ENCODE measurements at regions of chr5 and their contacts with region 1.

Region 1: DNA sequence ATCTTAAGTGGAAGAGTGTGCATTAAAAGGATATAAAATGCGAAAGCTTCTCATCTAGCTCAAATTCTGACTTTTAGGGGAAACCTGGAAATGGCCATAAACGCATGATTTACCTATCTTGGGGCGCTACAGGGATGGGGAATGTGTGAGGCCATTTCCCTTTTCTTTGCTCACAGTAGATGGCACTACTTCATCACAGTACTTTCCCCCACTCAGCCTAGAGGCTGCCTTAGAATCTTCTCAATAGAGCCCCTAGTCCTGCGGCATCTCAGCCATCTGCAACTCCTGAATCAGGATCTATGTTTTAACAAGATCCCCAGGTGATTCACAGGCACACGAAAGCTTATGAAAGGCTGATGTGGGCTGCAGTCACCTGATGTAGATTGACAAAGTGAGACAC is 110.8 kb downstream of the LHFPL2 start:
- H3K4me3 Mint-ChIP-seq: no peak overlapping the region
- H3K27ac Mint-ChIP-seq: peak overlapping the region; percentile 99
- H3K4me1 Mint-ChIP-seq: peaks cover 97% of the 10 kb centered on the region
- H3K27me3 Mint-ChIP-seq: no peaks in the 10 kb centered on the region

Region 2: DNA sequence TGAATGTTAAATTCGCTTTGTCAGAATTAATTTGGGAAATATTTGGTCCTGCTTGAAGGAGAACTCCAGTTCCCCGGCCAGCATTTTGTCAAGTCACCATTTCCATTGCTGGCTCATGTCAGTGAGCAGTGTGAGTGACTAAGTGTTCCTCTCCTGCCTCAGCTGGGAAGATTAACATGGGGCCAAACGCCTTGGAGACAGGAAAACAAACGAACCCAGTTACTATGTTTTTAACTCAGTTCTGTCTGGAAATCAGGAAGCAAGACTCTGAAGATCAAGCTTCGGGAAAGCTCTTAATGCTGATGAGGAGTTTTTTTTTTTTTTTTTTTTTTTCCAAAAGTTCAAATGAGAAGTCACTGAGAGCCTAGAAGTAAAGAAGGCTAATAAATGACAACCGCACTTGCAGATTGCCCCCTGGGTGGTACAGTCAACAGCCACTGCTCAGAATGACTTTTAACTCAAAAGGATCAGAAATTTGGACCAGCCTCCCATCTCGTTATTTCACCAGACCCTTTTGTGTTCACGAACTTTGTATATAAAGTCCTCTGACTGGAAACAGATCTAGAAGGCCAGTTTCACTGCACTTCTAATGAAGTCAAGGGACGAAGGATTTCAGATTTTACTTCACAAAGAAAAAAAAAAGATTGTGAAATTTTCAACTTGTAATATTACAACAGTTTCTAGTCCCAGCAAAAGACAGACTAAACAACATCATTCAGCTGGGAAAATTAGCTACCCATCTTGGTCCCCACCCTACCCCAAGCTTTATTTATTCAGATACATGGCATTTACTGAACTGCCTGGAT is 10.6 kb before region 1 on chr5:
- intact Hi-C with region 1: loop called (anchors 2 kb)
- H3K4me3 Mint-ChIP-seq: peak overlapping the region; percentile 6
- H3K27ac Mint-ChIP-seq: peak overlapping the region; percentile 92
- H3K4me1 Mint-ChIP-seq: peaks cover 68% of the 10 kb centered on the region
- H3K27me3 Mint-ChIP-seq: no peaks in the 10 kb centered on the region

Region 3: DNA sequence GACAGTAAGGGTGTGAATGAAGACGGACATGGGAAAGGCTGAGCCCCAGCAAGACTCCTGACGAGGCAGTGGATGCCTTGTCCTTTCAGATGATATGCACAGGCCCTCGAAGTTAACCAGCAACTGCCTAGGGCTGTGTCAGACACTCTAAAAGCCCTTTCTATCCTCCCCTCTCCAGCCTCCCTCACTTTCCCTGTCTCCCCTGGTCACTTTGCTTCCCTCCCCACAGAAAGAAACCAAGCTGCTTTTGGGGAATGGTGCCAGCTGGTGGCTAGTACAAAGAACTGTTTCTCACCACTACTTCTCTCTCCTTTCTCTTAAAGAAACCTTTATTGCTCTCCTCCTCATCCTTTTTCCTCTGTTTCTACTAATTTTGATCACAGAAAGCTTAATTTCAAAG is 89.4 kb after region 1 on chr5:
- intact Hi-C with region 1: loop called (anchors 2 kb)
- H3K4me3 Mint-ChIP-seq: no peak overlapping the region
- H3K27ac Mint-ChIP-seq: no peak overlapping the region
- H3K4me1 Mint-ChIP-seq: peaks cover 29% of the 10 kb centered on the region
- H3K27me3 Mint-ChIP-seq: peaks cover 2% of the 10 kb centered on the region

Region 4: GRCh38 chr5:78677777-78678668 is 140.2 kb after region 1 on chr5:
- intact Hi-C with region 1: no loop called
- H3K4me3 Mint-ChIP-seq: no peak overlapping the region
- H3K27ac Mint-ChIP-seq: no peak overlapping the region
- H3K4me1 Mint-ChIP-seq: no peaks in the 10 kb centered on the region
- H3K27me3 Mint-ChIP-seq: no peaks in the 10 kb centered on the region